CD4-positive, alpha-beta memory T cell (primary cell): ENCODE measurements at regions of chr10 and their contacts with region 1.

Region 1: GRCh38 chr10:103481974-103482531 is 3.0 kb upstream of the CALHM3 start:
- DNase-seq: peak; percentile 64 to 71 (median 66)
- H3K4me3 ChIP-seq: no peak overlapping the region
- H3K4me3 Mint-ChIP-seq: no peak overlapping the region
- H3K27ac ChIP-seq: no peak overlapping the region
- H3K27ac Mint-ChIP-seq: peak overlapping the region in 3 of 7 donors; percentile 3 to 79 (median 38)
- H3K4me1 ChIP-seq: no peaks in the 10 kb centered on the region
- H3K4me1 Mint-ChIP-seq: peaks cover 7 to 18% (median 9%) of the 10 kb centered on the region in 4 donors
- H3K27me3 ChIP-seq: no peaks in the 10 kb centered on the region
- H3K27me3 Mint-ChIP-seq: peaks cover 0 to 3% of the 10 kb centered on the region in 2 donors

Region 2: GRCh38 chr10:102835007-102835482 is 647.0 kb before region 1 on chr10:
- CTCF ChIA-PET with region 1: interaction called, 10 read pairs
- POLR2A ChIA-PET with region 1: no interaction called
- intact Hi-C with region 1: no loop called
- DNase-seq: peak; percentile 63 to 70 (median 66)
- H3K4me3 ChIP-seq: no peak overlapping the region
- H3K4me3 Mint-ChIP-seq: no peak overlapping the region
- H3K27ac ChIP-seq: no peak overlapping the region
- H3K27ac Mint-ChIP-seq: no peak overlapping the region
- H3K4me1 ChIP-seq: no peaks in the 10 kb centered on the region
- H3K4me1 Mint-ChIP-seq: peaks cover 0 to 1% (median 0%) of the 10 kb centered on the region in 4 donors
- H3K27me3 ChIP-seq: no peaks in the 10 kb centered on the region
- H3K27me3 Mint-ChIP-seq: peaks cover 3 to 12% of the 10 kb centered on the region in 2 donors

Region 3: GRCh38 chr10:103244663-103245271 is 237.3 kb before region 1 on chr10:
- CTCF ChIA-PET with region 1: no interaction called
- POLR2A ChIA-PET with region 1: no interaction called
- intact Hi-C with region 1: loop called (anchors 5 kb)
- DNase-seq: peak; percentile 48 to 58 (median 52)
- H3K4me3 ChIP-seq: no peak overlapping the region
- H3K4me3 Mint-ChIP-seq: no peak overlapping the region
- H3K27ac ChIP-seq: no peak overlapping the region
- H3K27ac Mint-ChIP-seq: peak overlapping the region in 1 of 7 donors; percentile 46
- H3K4me1 ChIP-seq: no peaks in the 10 kb centered on the region
- H3K4me1 Mint-ChIP-seq: peaks cover 5 to 11% (median 7%) of the 10 kb centered on the region in 4 donors
- H3K27me3 ChIP-seq: no peaks in the 10 kb centered on the region
- H3K27me3 Mint-ChIP-seq: peaks cover 4 to 6% of the 10 kb centered on the region in 2 donors

Region 4: DNA sequence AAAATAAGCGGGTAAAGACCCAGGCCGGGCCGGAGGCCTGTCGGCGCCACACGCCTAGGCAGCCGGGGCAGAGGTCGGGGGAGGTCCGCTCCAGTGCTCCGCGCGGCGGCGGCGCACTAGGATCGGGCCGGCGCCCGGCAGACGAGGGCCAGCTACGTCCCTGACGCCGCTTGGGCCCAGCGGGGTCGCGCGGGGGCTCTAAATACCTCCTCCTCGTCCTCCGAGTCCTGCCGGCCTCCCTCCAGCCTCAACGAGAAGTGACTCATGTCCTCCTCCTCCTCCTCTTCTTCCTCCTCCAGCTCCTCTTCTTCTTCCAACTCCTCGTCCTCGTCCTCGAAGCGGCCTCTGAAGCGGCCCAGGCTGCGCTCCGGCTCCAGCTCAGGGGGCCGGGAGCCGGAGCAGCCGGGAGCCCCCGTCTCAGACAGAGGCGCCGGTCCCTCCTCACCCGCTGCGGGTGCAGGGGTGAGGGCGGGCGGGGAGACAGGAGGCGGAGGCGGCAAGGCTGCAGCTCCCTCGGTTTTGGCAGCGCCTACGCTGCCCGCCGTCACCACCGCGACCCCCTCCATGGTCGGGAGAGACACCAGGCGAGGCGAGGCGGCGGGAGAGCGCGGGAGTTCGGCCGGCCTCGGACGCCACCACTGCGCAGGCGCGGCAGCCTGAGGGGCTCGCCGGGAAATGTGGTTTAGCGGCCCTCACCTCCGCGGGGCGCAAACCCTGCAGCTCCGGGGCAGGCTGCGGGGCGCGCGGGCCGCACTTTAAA is 131.4 kb before region 1 on chr10 and contains the start of gene PCGF6:
- CTCF ChIA-PET with region 1: no interaction called
- POLR2A ChIA-PET with region 1: no interaction called
- intact Hi-C with region 1: loop called (anchors 10 kb)
- DNase-seq: peak; percentile 56 to 76 (median 66)
- H3K4me3 ChIP-seq: peak within 1 kb of the TSS; percentile 42 to 83
- H3K4me3 Mint-ChIP-seq: peak within 1 kb of the TSS; percentile 84 to 94 (median 90)
- H3K27ac ChIP-seq: peak within 1 kb of the TSS; percentile 62
- H3K27ac Mint-ChIP-seq: peak within 1 kb of the TSS; percentile 81 to 94 (median 91)
- H3K4me1 ChIP-seq: peaks cover 19% of the 10 kb centered on the region
- H3K4me1 Mint-ChIP-seq: peaks cover 4 to 18% (median 9%) of the 10 kb centered on the region in 4 donors
- H3K27me3 ChIP-seq: no peaks in the 10 kb centered on the region
- H3K27me3 Mint-ChIP-seq: no peaks in the 10 kb centered on the region
- total RNA-seq, gene PCGF6: 8.7 to 8.8 TPM

Region 5: GRCh38 chr10:103451831-103452505 is 30.1 kb before region 1 on chr10 and contains the start of gene CALHM2:
- CTCF ChIA-PET with region 1: interaction called, 28 read pairs
- POLR2A ChIA-PET with region 1: interaction called, 11 read pairs
- intact Hi-C with region 1: loop called (anchors 1 kb)
- DNase-seq: peak in 4 of 5 donors; percentile 40 to 57 (median 44)
- H3K4me3 ChIP-seq: peak within 1 kb of the TSS; percentile 79 to 97
- H3K4me3 Mint-ChIP-seq: peak within 1 kb of the TSS; percentile 90 to 99 (median 96)
- H3K27ac ChIP-seq: peak within 1 kb of the TSS; percentile 72
- H3K27ac Mint-ChIP-seq: peak within 1 kb of the TSS; percentile 81 to 98 (median 95)
- H3K4me1 ChIP-seq: peaks cover 54% of the 10 kb centered on the region
- H3K4me1 Mint-ChIP-seq: peaks cover 42 to 74% (median 51%) of the 10 kb centered on the region in 4 donors
- H3K27me3 ChIP-seq: no peaks in the 10 kb centered on the region
- H3K27me3 Mint-ChIP-seq: no peaks in the 10 kb centered on the region
- total RNA-seq, gene CALHM2: 80.5 to 84.6 TPM

Region 6: GRCh38 chr10:103470761-103471653 is 11.0 kb before region 1 on chr10:
- CTCF ChIA-PET with region 1: interaction called, 15 read pairs
- POLR2A ChIA-PET with region 1: interaction called, 4 read pairs
- intact Hi-C with region 1: no loop called
- DNase-seq: peak; percentile 67 to 88 (median 74)
- H3K4me3 ChIP-seq: peak overlapping the region in 1 of 2 donors; percentile 3
- H3K4me3 Mint-ChIP-seq: peak overlapping the region; percentile 67 to 85 (median 79)
- H3K27ac ChIP-seq: peak overlapping the region; percentile 63
- H3K27ac Mint-ChIP-seq: peak overlapping the region; percentile 85 to 97 (median 90)
- H3K4me1 ChIP-seq: peaks cover 43% of the 10 kb centered on the region
- H3K4me1 Mint-ChIP-seq: peaks cover 30 to 69% (median 51%) of the 10 kb centered on the region in 4 donors
- H3K27me3 ChIP-seq: no peaks in the 10 kb centered on the region
- H3K27me3 Mint-ChIP-seq: no peaks in the 10 kb centered on the region

Region 7: GRCh38 chr10:103554488-103555324 is 72.7 kb after region 1 on chr10:
- CTCF ChIA-PET with region 1: no interaction called
- POLR2A ChIA-PET with region 1: no interaction called
- intact Hi-C with region 1: no loop called
- DNase-seq: peak in 1 of 5 donors; percentile 6
- H3K4me3 ChIP-seq: no peak overlapping the region
- H3K4me3 Mint-ChIP-seq: peak overlapping the region; percentile 61 to 84 (median 75)
- H3K27ac ChIP-seq: no peak overlapping the region
- H3K27ac Mint-ChIP-seq: peak overlapping the region in 4 of 7 donors; percentile 12 to 64 (median 26)
- H3K4me1 ChIP-seq: peaks cover 14% of the 10 kb centered on the region
- H3K4me1 Mint-ChIP-seq: peaks cover 10 to 21% (median 12%) of the 10 kb centered on the region in 4 donors
- H3K27me3 ChIP-seq: peaks cover 5% of the 10 kb centered on the region
- H3K27me3 Mint-ChIP-seq: peaks cover 24 to 25% of the 10 kb centered on the region in 2 donors